ENCODE measurements at regions of chr2 and their contacts with region 1.

Region 1: DNA sequence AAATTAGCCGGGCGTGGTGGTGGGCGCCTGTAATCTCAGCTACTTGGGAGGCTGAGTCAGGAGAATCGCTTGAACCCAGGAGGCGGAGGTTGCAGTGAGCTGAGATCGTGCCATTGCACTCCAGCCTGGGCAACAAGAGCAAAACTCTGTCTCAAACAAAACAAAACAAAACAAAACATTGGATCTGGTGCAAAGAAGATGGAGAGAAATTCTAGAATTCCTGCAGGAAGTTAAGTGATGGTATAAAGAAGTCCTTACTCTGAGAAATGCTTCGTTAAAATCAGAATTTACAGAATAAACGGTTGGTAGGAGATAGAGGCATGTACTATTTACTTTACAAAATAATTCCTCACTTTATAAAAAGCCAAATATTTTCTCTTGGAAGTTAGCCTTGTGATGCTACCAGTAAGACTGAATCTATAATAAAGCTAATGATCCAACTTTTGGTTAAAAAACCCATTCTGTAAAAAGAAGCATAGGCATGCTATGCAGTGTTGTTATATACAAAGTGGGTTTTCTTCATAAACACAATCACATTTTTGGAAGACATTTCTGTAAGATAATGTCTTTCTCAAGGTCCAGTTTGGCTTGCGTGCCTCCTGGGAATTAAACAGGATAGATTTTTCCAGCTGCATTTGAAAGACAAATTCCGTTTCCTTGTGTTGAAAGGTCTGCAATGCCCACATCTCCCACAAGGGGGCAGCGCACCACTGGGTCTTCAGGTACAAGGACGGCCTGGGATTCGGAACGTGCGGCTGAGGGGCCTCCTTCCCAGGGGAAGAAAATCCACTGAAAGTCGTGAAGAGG is 35.6 kb upstream of the PNO1 start:
- H3K4me3 Mint-ChIP-seq: peak overlapping the region; percentile 23
- H3K27ac Mint-ChIP-seq: peak overlapping the region; percentile 23
- H3K4me1 Mint-ChIP-seq: peaks cover 12% of the 10 kb centered on the region
- H3K27me3 Mint-ChIP-seq: no peaks in the 10 kb centered on the region

Region 2: DNA sequence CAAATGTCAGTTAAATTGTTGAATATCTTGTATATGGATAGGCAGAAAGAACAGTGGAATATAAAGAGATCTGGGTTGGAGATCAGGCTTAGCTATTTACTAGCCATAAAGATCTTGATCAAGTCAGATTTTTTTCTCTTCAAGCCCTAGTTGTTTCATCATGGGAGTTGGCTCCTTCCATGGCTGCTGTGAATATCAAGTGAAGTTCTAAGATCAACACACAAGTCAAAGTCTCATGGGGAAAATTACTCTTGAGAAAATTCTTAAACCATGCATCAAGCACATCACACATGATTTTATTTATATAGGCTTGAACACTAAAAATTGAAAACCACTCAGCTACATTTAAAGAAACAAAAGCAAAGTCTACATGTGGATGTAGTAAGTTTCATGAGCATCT is 139.1 kb before region 1 on chr2:
- intact Hi-C with region 1: no loop called
- H3K4me3 Mint-ChIP-seq: no peak overlapping the region
- H3K27ac Mint-ChIP-seq: no peak overlapping the region
- H3K4me1 Mint-ChIP-seq: no peaks in the 10 kb centered on the region
- H3K27me3 Mint-ChIP-seq: no peaks in the 10 kb centered on the region

Region 3: DNA sequence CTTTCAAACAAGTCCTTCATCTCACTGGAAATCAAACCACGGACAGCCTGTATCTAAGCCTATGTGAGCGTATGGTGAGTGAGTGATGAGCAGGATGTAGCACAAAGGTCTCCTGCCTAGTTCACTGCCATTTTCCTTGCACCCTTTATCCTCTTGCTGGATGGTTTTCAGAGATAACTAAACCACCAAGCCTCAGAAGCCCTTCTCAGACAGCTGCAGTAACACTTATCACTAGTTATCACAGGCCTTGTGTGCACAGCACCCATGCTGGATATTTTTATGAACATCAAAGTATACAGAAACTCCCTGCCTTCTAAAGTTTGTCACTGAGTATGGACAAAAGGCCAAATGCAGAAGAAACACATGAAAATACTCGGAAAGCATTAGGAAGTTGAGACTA is 128.7 kb before region 1 on chr2:
- intact Hi-C with region 1: no loop called
- H3K4me3 Mint-ChIP-seq: no peak overlapping the region
- H3K27ac Mint-ChIP-seq: no peak overlapping the region
- H3K4me1 Mint-ChIP-seq: no peaks in the 10 kb centered on the region
- H3K27me3 Mint-ChIP-seq: peaks cover 4% of the 10 kb centered on the region

Region 4: DNA sequence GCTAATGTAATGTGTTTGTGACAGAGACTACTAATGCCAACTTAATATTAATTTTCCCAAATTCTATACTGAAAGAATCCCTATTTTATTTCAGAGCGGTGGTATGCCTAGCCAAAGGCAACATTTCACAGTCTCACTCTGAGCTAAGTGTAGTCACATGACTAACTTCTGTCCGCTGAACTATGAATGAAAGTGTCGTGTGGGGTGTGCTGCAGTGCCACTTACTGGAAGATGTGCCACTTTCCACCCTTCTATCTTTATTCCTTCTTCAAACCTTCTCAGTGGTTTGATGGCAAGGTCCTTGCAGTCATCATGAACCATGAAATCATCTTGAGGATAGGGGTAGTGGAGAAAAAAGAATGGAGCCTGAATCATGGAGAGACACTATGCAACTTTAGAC is 12.0 kb before region 1 on chr2:
- intact Hi-C with region 1: no loop called
- H3K4me3 Mint-ChIP-seq: no peak overlapping the region
- H3K27ac Mint-ChIP-seq: no peak overlapping the region
- H3K4me1 Mint-ChIP-seq: peaks cover 7% of the 10 kb centered on the region
- H3K27me3 Mint-ChIP-seq: no peaks in the 10 kb centered on the region

Region 5: GRCh38 chr2:68157402-68158133 is 35.5 kb after region 1 on chr2 and contains the start of gene PNO1:
- intact Hi-C with region 1: loop called (anchors 2 kb)
- H3K4me3 Mint-ChIP-seq: peak within 1 kb of the TSS; percentile 99
- H3K27ac Mint-ChIP-seq: peak within 1 kb of the TSS; percentile 95
- H3K4me1 Mint-ChIP-seq: peaks cover 13% of the 10 kb centered on the region
- H3K27me3 Mint-ChIP-seq: no peaks in the 10 kb centered on the region

Region 6: DNA sequence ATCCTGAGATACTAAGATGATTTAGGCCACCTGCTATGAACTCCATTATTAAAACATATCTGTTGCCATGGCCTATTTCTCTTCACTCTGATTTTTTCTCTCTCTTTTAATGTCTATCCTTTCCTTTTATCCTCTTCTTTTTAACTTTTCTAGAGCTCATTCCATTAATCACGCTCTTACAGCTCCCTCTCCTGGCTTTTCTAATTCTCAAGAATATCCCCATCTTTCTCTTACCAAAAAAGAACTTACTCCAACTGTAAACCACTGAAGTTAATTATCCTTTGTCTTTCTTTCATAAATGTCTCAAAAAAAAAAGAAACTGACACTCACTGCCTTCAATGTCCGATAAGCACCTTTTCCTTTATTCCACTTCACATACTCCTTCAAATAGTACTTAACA is 122.4 kb after region 1 on chr2:
- intact Hi-C with region 1: loop called (anchors 5 kb)
- H3K4me3 Mint-ChIP-seq: no peak overlapping the region
- H3K27ac Mint-ChIP-seq: no peak overlapping the region
- H3K4me1 Mint-ChIP-seq: peaks cover 19% of the 10 kb centered on the region
- H3K27me3 Mint-ChIP-seq: no peaks in the 10 kb centered on the region

Region 7: GRCh38 chr2:68295516-68295915 is 173.4 kb after region 1 on chr2:
- intact Hi-C with region 1: loop called (anchors 2 kb)
- H3K4me3 Mint-ChIP-seq: no peak overlapping the region
- H3K27ac Mint-ChIP-seq: no peak overlapping the region
- H3K4me1 Mint-ChIP-seq: peaks cover 15% of the 10 kb centered on the region
- H3K27me3 Mint-ChIP-seq: no peaks in the 10 kb centered on the region

Region 8: GRCh38 chr2:68441179-68441993 is 319.3 kb after region 1 on chr2:
- intact Hi-C with region 1: loop called (anchors 1 kb)
- H3K4me3 Mint-ChIP-seq: peak overlapping the region; percentile 17
- H3K27ac Mint-ChIP-seq: peak overlapping the region; percentile 83
- H3K4me1 Mint-ChIP-seq: peaks cover 45% of the 10 kb centered on the region
- H3K27me3 Mint-ChIP-seq: no peaks in the 10 kb centered on the region

Measured in dendritic cell treated with granulocyte-macrophage colony-stimulating factor and Interleukin-4, amounts not matched to agents 40 ng/mL and 50 ng/mL, for 4 days (primary cell).